ENCODE measurements at regions of chr15 and their contacts with region 1.

Region 1: GRCh38 chr15:44490628-44491027 is 46.3 kb upstream of the EIF3J start:
- DNase-seq: no peak

Region 2: DNA sequence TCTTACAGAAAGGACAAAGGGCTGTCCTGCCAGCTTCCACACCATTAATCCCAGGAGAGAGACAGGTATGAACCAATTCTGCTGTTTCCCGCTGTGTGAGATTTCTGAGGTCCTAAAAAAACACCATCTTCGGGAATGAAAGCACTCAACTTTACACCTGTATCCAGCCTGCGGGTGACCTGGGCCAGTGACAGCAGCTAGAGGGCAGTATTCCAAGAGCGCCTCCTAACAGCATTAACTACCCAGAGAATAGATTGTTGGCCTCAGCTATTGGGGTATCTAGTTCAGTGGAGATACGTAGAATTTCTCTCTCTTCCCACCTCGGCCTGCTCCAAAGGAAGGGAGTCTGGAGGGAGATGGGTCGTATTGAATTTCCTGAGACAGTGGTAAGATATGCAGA is 608.7 kb before region 1 on chr15:
- intact Hi-C with region 1: loop called (anchors 10 kb)
- DNase-seq: peak in 7 of 42 donors; percentile 13 to 64 (median 22)